ENCODE measurements at regions of chr20 and their contacts with region 1.

Region 1: GRCh38 chr20:35619196-35620095 is 3.8 kb downstream of the SPAG4 start:
- DNase-seq: peak; percentile 54
- H3K4me3 ChIP-seq: peak overlapping the region; percentile 64
- H3K27ac ChIP-seq: no peak overlapping the region
- H3K27me3 ChIP-seq: no peaks in the 10 kb centered on the region
- CTCF ChIP-seq: peak; percentile 45

Region 2: DNA sequence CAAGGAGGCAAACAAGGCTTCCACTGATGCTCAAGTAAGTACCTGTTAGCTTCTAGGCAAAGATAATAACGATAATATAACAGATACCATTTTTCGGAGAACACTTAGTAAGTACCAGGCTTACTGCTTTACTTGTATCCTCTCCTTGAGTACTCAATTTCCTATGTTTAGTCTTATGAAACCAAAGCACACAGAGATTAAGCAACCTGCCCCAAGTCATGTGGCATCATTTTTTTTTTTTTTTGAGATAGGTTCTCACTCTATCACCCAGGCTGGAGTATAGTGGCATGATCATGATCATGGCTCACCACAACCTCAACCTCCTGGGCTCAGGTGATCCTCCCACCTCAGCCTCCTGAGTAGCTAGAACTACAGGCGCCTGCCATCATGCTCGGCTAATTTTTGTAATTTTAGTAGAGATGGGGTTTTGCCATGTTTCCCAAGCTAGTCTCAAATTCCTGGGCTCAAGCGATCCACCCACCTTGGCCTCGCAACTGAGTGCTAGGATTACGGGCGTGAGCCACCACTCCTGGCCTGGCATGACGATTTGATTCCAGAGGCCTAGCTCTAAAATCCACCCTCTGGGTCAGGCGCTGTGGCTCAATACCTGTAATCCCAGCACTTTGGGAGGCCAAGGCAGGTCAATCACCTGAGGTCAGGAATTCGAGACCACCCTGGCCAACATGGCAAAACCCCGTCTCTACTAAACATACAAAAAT is 10.1 kb after region 1 on chr20:
- CTCF ChIA-PET with region 1: interaction called, 12 read pairs
- POLR2A ChIA-PET with region 1: interaction called, 5 read pairs
- DNase-seq: no peak
- H3K4me3 ChIP-seq: no peak overlapping the region
- H3K27ac ChIP-seq: no peak overlapping the region
- H3K27me3 ChIP-seq: no peaks in the 10 kb centered on the region
- CTCF ChIP-seq: no peak

Region 3: GRCh38 chr20:35664544-35665221 is 45.2 kb after region 1 on chr20 and contains the starts of genes CPNE1 and RBM12:
- CTCF ChIA-PET with region 1: no interaction called
- POLR2A ChIA-PET with region 1: interaction called, 11 read pairs
- DNase-seq: peak; percentile 78
- H3K4me3 ChIP-seq: peak within 1 kb of the TSS; percentile 99
- H3K27ac ChIP-seq: peak within 1 kb of the TSS; percentile 91
- H3K27me3 ChIP-seq: no peaks in the 10 kb centered on the region
- CTCF ChIP-seq: no peak
- polyA plus RNA-seq, gene CPNE1: 93.5 and 95.1 TPM in 2 replicates
- polyA plus RNA-seq, gene RBM12: 73.0 and 91.1 TPM in 2 replicates

Measured in AG04450 (cell line).